Ascending aorta (tissue), 2 donors: ENCODE measurements at regions of chr1 and their contacts with region 1.

Region 1: GRCh38 chr1:226547754-226548191 is 791 bp upstream of the STUM start:
- DNase-seq: peak; percentile 30 to 91
- H3K4me3 ChIP-seq: peak overlapping the region; percentile 65 to 68
- H3K27ac ChIP-seq: no peak overlapping the region
- H3K4me1 ChIP-seq: peaks cover 0 to 18% of the 10 kb centered on the region in 2 donors
- H3K27me3 ChIP-seq: no peaks in the 10 kb centered on the region
- CTCF ChIP-seq: peak; percentile 73 to 92 (median 90)

Region 2: DNA sequence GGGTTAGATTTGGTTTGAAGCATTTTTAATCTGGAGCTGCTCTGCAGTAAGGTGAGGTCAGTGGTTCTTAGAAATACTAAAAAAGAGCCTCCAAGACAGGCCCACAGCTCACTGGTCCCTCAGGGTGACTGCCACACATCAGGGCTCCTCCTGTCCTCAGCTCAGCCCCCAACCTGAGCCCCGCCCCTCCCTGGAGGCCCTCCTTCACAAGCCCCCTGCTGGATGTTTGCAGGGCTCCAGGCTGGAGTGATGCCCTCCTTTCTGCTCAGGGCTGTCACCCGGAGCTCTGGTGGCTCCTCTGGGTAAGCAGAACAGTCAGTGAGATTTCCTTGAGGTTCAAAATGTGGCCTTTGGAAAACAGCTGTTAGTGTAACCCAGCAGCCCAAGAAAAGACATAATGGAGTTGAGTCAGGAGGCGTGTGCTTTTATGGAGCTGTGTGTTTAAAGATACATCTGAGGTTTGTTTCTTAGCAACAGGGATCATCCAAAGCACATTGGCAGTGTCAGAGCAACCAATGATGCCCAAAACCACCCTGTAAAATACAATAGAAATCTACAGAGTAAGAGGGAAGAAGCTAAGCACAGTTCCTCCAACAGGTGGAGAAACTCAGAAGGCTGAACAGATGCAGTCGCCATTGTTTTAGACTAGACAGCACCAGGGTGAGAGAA is 22.2 kb after region 1 on chr1:
- intact Hi-C with region 1: loop called (anchors 2 kb)
- DNase-seq: no peak
- H3K4me3 ChIP-seq: no peak overlapping the region
- H3K27ac ChIP-seq: no peak overlapping the region
- H3K4me1 ChIP-seq: peaks cover 0 to 10% of the 10 kb centered on the region in 2 donors
- H3K27me3 ChIP-seq: no peaks in the 10 kb centered on the region
- CTCF ChIP-seq: no peak

Region 3: DNA sequence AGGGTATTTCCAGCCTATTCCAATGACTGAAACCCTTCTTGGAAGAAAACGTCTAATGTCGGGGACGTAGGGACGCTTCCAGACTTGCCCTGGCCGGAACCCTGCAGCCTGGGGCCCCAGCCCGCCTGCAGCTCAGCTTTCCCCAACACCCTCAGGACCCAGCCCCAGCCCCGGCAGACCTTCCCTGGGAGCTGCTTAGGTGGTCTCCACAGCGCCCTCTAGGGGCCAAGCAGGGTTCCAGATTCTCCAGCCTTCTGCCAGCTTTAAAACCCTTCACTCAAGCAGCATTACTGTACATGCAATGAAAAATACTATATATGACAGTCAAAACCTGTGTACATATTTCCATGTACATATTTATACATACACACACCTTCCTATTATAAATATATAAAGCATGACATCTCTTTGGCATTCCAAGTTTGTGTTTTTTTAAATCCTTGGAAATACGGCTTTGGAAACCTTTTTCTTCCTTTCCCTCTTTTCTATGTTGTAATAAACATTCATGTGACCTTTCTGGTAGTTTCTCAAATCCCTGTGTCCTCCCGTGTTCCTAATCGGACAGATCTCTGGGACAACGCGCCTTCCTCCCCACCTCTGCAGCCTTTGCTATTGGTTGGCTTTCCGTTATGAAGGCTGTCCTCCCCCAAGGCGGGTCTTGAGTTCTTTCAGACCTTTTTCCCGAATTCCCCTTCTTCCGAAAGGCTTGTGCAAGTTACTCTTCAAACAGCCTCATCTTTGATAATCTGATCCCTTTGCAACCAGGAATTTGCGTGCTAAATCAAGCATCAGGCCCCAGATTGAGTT is 61.1 kb after region 1 on chr1:
- intact Hi-C with region 1: loop called (anchors 2 kb)
- DNase-seq: peak in 1 of 2 donors; percentile 74
- H3K4me3 ChIP-seq: no peak overlapping the region
- H3K27ac ChIP-seq: no peak overlapping the region
- H3K4me1 ChIP-seq: no peaks in the 10 kb centered on the region
- H3K27me3 ChIP-seq: no peaks in the 10 kb centered on the region
- CTCF ChIP-seq: peak; percentile 48 to 79 (median 72)

Region 4: DNA sequence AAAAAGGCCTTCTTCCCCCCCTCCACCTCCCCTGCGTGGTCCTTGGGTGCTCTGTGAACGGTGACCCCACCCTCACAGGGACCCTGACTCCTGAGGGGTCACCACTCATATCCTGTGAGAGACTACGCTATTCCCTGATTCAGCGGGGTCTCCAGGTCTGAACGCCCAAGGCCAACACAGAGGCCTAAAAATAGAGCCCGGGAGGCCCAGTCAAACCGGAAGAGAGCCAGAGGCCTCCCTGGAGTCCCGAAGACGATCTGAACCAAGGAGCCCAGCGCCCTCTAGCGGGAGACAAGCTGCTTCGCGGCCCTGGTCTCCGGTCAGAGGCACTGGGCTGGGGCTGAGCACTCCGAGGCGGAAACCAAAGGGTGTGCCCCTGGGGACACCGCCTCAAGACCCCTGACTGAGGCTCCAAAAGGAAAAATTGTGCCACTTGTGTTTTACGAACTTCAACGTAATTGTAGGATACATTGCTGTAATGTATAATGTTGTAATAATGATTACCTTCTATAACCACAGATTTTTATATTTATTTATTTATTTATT is 280.3 kb after region 1 on chr1:
- intact Hi-C with region 1: loop called (anchors 5 kb)
- DNase-seq: peak; percentile 71 to 98
- H3K4me3 ChIP-seq: peak overlapping the region in 1 of 2 donors; percentile 33
- H3K27ac ChIP-seq: peak overlapping the region; percentile 55 to 64
- H3K4me1 ChIP-seq: no peaks in the 10 kb centered on the region
- H3K27me3 ChIP-seq: no peaks in the 10 kb centered on the region
- CTCF ChIP-seq: peak; percentile 93 to 97 (median 93)